Naive thymus-derived CD4-positive, alpha-beta T cell (primary cell): ENCODE measurements at regions of chr1 and their contacts with region 1.

Region 1: GRCh38 chr1:158998781-158999161 is 10.9 kb upstream of the IFI16 start:
- DNase-seq: peak in 7 of 9 donors; percentile 43 to 74 (median 65)
- ATAC-seq: peak; percentile 88
- H3K4me3 ChIP-seq: no peak overlapping the region
- H3K4me3 Mint-ChIP-seq: peak overlapping the region in 7 of 10 donors; percentile 1 to 65 (median 44)
- H3K27ac ChIP-seq: no peak overlapping the region
- H3K27ac Mint-ChIP-seq: peak overlapping the region in 5 of 9 donors; percentile 10 to 70 (median 48)
- H3K4me1 ChIP-seq: peaks cover 6 to 21% of the 10 kb centered on the region in 2 donors
- H3K4me1 Mint-ChIP-seq: peaks cover 6 to 36% (median 16%) of the 10 kb centered on the region in 7 donors
- H3K27me3 ChIP-seq: no peaks in the 10 kb centered on the region
- H3K27me3 Mint-ChIP-seq: no peaks in the 10 kb centered on the region

Region 2: GRCh38 chr1:158203693-158204457 is 794.9 kb before region 1 on chr1:
- CTCF ChIA-PET with region 1: interaction called, 15 read pairs
- POLR2A ChIA-PET with region 1: no interaction called
- intact Hi-C with region 1: loop called (anchors 1 kb)
- DNase-seq: peak in 7 of 9 donors; percentile 9 to 49 (median 44)
- ATAC-seq: peak; percentile 76
- H3K4me3 ChIP-seq: no peak overlapping the region
- H3K4me3 Mint-ChIP-seq: peak overlapping the region in 5 of 10 donors; percentile 2 to 56 (median 32)
- H3K27ac ChIP-seq: no peak overlapping the region
- H3K27ac Mint-ChIP-seq: no peak overlapping the region
- H3K4me1 ChIP-seq: peaks cover 3 to 7% of the 10 kb centered on the region in 2 donors
- H3K4me1 Mint-ChIP-seq: peaks cover 8 to 18% (median 14%) of the 10 kb centered on the region in 7 donors
- H3K27me3 ChIP-seq: no peaks in the 10 kb centered on the region
- H3K27me3 Mint-ChIP-seq: peaks cover 32 to 51% (median 44%) of the 10 kb centered on the region in 5 donors

Region 3: GRCh38 chr1:158506369-158506987 is 492.3 kb before region 1 on chr1:
- CTCF ChIA-PET with region 1: no interaction called
- POLR2A ChIA-PET with region 1: no interaction called
- intact Hi-C with region 1: loop called in 1 of 2 experiments (anchors 1 kb)
- DNase-seq: peak in 3 of 9 donors; percentile 4 to 33 (median 9)
- ATAC-seq: peak; percentile 57
- H3K4me3 ChIP-seq: no peak overlapping the region
- H3K4me3 Mint-ChIP-seq: no peak overlapping the region
- H3K27ac ChIP-seq: no peak overlapping the region
- H3K27ac Mint-ChIP-seq: no peak overlapping the region
- H3K4me1 ChIP-seq: no peaks in the 10 kb centered on the region
- H3K4me1 Mint-ChIP-seq: no peaks in the 10 kb centered on the region
- H3K27me3 ChIP-seq: no peaks in the 10 kb centered on the region
- H3K27me3 Mint-ChIP-seq: peaks cover 31 to 41% (median 34%) of the 10 kb centered on the region in 5 donors

Region 4: DNA sequence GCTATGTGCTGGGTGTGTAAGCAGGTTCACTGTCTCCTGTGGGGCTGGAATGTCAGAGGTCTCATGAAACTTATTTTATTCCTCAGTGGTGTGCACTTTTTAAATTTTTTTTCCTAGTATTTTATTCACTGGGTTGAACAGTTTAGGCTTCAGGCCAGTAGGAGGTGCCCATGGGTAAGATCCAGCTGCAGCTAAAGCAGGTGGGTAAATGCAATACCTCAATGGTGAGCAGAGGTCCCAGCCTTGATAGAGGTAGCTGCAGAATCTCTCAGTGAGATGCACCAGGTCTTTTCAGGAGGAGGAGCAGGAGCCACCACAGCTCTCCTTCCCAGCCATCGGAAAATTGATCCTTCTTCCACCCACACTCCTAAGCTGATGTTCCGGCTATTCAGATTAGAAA is 205.2 kb before region 1 on chr1:
- CTCF ChIA-PET with region 1: interaction called, 5 read pairs
- POLR2A ChIA-PET with region 1: no interaction called
- intact Hi-C with region 1: loop called (anchors 1 kb)
- DNase-seq: peak in 3 of 9 donors; percentile 1 to 18 (median 8)
- ATAC-seq: peak; percentile 67
- H3K4me3 ChIP-seq: no peak overlapping the region
- H3K4me3 Mint-ChIP-seq: no peak overlapping the region
- H3K27ac ChIP-seq: no peak overlapping the region
- H3K27ac Mint-ChIP-seq: no peak overlapping the region
- H3K4me1 ChIP-seq: no peaks in the 10 kb centered on the region
- H3K4me1 Mint-ChIP-seq: peaks cover 0 to 4% (median 0%) of the 10 kb centered on the region in 7 donors
- H3K27me3 ChIP-seq: no peaks in the 10 kb centered on the region
- H3K27me3 Mint-ChIP-seq: peaks cover under 1 to 33% (median 9%) of the 10 kb centered on the region in 5 donors

Region 5: GRCh38 chr1:159009704-159010361 is 11.1 kb after region 1 on chr1 and contains the start of gene IFI16:
- CTCF ChIA-PET with region 1: interaction called, 4 read pairs
- POLR2A ChIA-PET with region 1: interaction called, 7 read pairs
- intact Hi-C with region 1: loop called (anchors 1 kb)
- DNase-seq: peak in 8 of 9 donors; percentile 56 to 80 (median 71)
- ATAC-seq: peak; percentile 84
- H3K4me3 ChIP-seq: peak within 1 kb of the TSS; percentile 86
- H3K4me3 Mint-ChIP-seq: peak within 1 kb of the TSS; percentile 85 to 98 (median 92)
- H3K27ac ChIP-seq: peak within 1 kb of the TSS; percentile 87
- H3K27ac Mint-ChIP-seq: peak within 1 kb of the TSS; percentile 92 to 99 (median 96)
- H3K4me1 ChIP-seq: peaks cover 28% of the 10 kb centered on the region in 2 donors
- H3K4me1 Mint-ChIP-seq: peaks cover 37 to 64% (median 54%) of the 10 kb centered on the region in 7 donors
- H3K27me3 ChIP-seq: no peaks in the 10 kb centered on the region
- H3K27me3 Mint-ChIP-seq: no peaks in the 10 kb centered on the region
- total RNA-seq, gene IFI16: 42.4 to 307 (median 96.0) TPM